AG04450 (cell line): ENCODE measurements at regions of chr1 and their contacts with region 1.

Region 1: DNA sequence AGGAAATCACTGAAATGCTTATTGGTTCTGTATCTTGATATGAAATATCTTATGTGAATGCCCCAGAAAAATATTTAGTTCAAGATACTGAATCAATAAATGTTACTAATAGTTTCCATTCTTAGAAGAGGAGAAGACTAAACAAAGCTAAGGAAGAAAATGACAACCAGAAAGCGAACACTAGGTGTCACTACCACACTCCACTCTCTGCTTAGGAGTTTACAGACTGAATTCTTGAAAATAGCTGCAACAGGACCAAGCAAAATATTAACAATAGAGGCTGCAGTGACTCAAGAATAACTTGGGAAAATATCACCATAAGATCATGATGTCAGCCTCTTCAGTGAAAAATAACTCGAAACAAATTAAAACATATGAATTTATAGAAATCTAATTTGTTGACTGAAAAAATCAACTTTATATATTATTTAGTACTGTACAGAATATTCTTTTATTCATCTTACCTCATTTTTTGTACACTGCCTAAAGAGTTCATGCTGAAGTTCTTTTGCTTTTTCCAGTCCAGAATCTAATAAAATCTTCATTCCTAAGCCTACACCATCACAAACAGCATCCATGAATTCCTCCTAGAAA is 61.6 kb downstream of the KIF14 start:
- DNase-seq: peak; percentile 41
- H3K4me3 ChIP-seq: no peak overlapping the region
- H3K27ac ChIP-seq: no peak overlapping the region
- H3K27me3 ChIP-seq: no peaks in the 10 kb centered on the region
- CTCF ChIP-seq: peak; percentile 76

Region 2: DNA sequence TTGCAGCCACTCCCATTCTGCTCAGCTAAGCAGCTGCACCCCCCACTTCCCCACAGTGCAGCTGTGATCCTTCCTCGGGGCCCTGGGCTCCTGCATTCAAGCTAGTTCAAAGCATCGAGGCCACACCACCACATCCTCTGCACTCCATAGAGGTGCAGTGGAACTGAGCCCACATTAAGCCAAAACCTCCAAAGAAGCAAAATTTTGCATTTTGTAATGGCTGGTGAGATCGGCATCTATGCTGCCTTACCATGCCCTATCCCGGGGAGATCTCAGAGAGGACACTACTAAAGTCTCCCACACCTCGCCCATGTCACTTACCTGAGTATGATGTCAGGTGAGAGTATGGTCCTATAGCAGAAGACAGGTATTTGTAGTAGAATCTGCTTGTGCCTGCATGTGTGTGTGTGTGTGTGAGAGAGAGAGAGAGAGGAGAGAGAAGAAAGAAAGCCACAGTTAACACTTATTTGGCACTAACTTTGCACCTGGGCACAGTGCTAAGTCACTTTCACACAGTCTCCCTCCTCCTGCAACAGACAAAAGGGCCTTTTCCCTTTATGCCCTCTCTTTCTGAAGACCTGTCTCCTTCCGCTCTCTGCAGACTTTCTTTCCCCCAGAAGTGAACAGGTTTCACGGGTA is 28.2 kb before region 1 on chr1:
- CTCF ChIA-PET with region 1: no interaction called
- POLR2A ChIA-PET with region 1: no interaction called
- DNase-seq: no peak
- H3K4me3 ChIP-seq: no peak overlapping the region
- H3K27ac ChIP-seq: no peak overlapping the region
- H3K27me3 ChIP-seq: no peaks in the 10 kb centered on the region
- CTCF ChIP-seq: no peak

Region 3: GRCh38 chr1:200542162-200542561 is 16.8 kb before region 1 on chr1:
- CTCF ChIA-PET with region 1: interaction called, 15 read pairs
- POLR2A ChIA-PET with region 1: no interaction called
- DNase-seq: no peak
- H3K4me3 ChIP-seq: no peak overlapping the region
- H3K27ac ChIP-seq: no peak overlapping the region
- H3K27me3 ChIP-seq: peaks cover 5% of the 10 kb centered on the region
- CTCF ChIP-seq: no peak

Region 4: DNA sequence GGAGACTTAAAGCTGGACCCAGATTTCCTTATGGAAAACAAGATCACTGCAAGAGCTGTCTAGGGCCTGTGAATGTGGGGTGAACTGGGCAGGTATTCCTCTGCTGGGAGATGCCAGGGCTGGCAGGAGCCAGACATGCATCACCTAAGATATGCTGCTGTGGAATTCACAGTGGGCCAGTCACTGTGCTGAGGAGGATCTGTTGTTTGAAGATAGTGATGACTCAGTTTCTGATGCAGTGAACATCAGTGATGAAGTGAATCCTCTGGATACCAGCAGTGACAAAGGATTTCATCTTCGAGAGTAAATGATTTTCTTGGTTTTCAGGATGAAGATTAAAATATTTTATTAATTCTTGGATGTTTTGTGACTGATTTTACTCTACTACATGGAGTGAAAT is 149.8 kb after region 1 on chr1:
- CTCF ChIA-PET with region 1: no interaction called
- POLR2A ChIA-PET with region 1: no interaction called
- DNase-seq: no peak
- H3K4me3 ChIP-seq: no peak overlapping the region
- H3K27ac ChIP-seq: no peak overlapping the region
- H3K27me3 ChIP-seq: no peaks in the 10 kb centered on the region
- CTCF ChIP-seq: no peak

Region 5: GRCh38 chr1:200837931-200838571 is 279.1 kb after region 1 on chr1:
- CTCF ChIA-PET with region 1: interaction called, 38 read pairs
- POLR2A ChIA-PET with region 1: no interaction called
- DNase-seq: no peak
- H3K4me3 ChIP-seq: no peak overlapping the region
- H3K27ac ChIP-seq: no peak overlapping the region
- H3K27me3 ChIP-seq: no peaks in the 10 kb centered on the region
- CTCF ChIP-seq: peak; percentile 52